GM12878 (cell line): ENCODE measurements at regions of chr10 and their contacts with region 1.

Region 1: DNA sequence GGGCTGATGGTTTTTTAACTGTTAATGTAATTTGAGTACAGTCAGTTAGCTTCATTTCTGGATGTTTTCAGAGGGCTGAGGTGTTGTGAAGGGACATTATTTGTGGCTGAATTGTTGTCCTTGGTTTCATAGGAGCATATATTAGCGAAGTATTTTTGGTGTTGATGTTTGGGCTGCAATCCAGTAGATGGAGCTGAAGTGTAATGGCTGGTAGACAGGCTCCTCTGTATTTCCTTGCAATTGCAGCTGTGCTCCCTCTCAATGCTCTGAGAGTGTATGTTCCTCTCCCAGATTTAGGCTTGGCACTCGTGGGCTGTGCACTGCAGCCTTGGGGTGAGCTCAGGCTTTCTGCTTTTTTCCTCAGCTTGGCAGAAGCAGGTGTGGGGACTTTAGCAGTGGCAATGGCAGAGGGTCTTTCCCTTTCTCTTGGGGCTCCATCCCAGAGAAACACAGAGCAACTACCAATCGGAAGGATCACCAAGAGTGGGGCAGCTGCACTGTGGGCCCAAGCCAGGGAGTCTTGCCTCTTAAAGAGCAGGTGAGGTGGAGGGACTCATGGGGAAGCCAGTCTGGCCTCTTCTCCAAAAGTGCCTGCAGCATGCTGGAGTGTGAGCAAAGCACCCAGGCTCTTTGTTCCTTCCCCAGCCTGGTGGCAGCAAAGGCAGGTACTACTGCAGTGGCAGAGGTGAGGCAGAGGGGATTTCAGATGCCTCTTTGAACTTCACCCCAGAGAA is 544.4 kb downstream of the SH2D4B start:
- DNase-seq: no peak
- ATAC-seq: peak; percentile 74
- H3K4me3 ChIP-seq: no peak overlapping the region
- H3K27ac ChIP-seq: no peak overlapping the region
- H3K4me1 ChIP-seq: no peaks in the 10 kb centered on the region
- H3K27me3 ChIP-seq: no peaks in the 10 kb centered on the region
- CTCF ChIP-seq: peak; percentile 47 to 50 (median 49); a peak in 5 of 6 replicates
- EP300 ChIP-seq: no peak
- POLR2A ChIP-seq: no peak
- RAD21 ChIP-seq: peak; percentile 90

Region 2: GRCh38 chr10:81096558-81096957 is 14.5 kb after region 1 on chr10:
- CTCF ChIA-PET with region 1: interaction called, 5 read pairs
- POLR2A ChIA-PET with region 1: interaction called, 7 read pairs
- RAD21 ChIA-PET with region 1: no interaction called
- SMC1A ChIA-PET with region 1: interaction called, 14 read pairs
- in situ Hi-C with region 1: no loop called
- intact Hi-C with region 1: no loop called
- DNase-seq: no peak
- ATAC-seq: peak; percentile 83
- H3K4me3 ChIP-seq: 0 out of 2 replicates have a peak overlapping the region, but pooled peaks have one; percentile 2
- H3K27ac ChIP-seq: no peak overlapping the region
- H3K4me1 ChIP-seq: no peaks in the 10 kb centered on the region
- H3K27me3 ChIP-seq: no peaks in the 10 kb centered on the region
- CTCF ChIP-seq: no peak
- EP300 ChIP-seq: 0 out of 4 replicates have a peak, but pooled peaks of 1 of the 2 experiments have one; percentile 18
- POLR2A ChIP-seq: no peak
- RAD21 ChIP-seq: no peak